ENCODE measurements at regions of chr19 and their contacts with region 1.

Region 1: DNA sequence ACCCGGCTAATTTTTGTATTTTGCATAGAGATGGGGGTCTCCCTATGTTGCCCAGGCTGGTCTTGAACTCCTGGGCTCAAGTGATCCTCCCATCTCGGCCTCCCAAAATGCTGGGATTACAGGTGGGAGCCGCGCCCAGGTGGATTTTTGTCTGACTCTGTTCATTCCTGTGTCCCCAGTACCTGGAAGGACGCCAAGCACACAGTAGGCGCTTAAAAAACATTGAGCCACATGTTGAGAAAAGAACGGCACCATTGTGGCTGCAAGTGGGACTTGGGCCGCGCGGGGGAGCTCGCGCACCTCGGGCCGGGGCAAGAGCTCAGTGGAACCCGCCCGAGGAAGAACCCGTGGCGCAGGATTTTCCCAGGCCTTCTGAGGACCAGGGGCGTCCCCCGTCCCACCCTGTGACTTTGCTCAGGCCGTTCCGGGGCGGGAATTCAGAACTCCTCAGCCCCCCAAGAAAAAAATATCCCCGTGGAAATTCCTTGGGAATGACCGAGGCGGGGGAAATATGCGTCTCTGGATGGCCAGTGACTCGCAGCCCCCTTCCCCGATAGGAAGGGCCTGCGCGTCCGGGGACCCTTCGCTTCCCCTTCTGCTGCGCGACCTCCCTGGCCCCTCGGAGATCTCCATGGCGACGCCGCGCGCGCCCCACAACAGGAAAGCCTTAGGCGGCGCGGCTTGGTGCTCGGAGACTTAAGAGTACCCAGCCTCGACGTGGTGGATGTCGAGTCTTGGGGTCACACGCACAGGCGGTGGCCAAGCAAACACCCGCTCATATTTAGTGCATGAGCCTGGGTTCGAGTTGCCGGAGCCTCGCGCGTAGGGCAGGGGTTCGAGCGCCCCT is 1.4 kb upstream of the ICAM1 start:
- DNase-seq: peak; percentile 72 to 93 (median 86)
- ATAC-seq: peak; percentile 69
- H3K4me3 ChIP-seq: peak overlapping the region; percentile 80
- H3K4me3 Mint-ChIP-seq: peak overlapping the region; percentile 86
- H3K27ac ChIP-seq: peak overlapping the region; percentile 77 to 95
- H3K27ac Mint-ChIP-seq: peak overlapping the region; percentile 80
- H3K4me1 ChIP-seq: peaks cover 36% of the 10 kb centered on the region
- H3K4me1 Mint-ChIP-seq: peaks cover 38% of the 10 kb centered on the region
- H3K27me3 ChIP-seq: no peaks in the 10 kb centered on the region
- H3K27me3 Mint-ChIP-seq: no peaks in the 10 kb centered on the region
- CTCF ChIP-seq: peak; percentile 94

Region 2: DNA sequence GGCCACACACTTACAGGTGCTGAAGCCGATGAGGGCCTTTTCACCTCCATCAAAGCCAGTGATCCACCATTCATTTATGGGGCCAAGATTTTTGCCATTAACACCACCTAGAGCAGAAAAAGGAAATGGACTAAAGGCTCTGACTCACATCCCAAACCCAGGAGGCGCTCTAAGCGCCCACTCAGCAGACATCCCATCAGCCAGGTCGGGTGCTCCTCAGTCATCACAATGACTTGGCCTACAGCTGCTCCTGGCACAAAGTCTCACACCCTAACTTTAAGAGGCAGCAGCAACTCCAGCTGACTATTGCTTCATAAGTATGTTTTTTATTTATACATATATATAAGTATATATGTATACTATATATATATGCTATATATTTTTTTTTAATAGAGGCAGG is 113.7 kb before region 1 on chr19:
- CTCF ChIA-PET with region 1: no interaction called
- POLR2A ChIA-PET with region 1: no interaction called
- intact Hi-C with region 1: no loop called
- DNase-seq: no peak
- ATAC-seq: no peak
- H3K4me3 ChIP-seq: no peak overlapping the region
- H3K4me3 Mint-ChIP-seq: no peak overlapping the region
- H3K27ac ChIP-seq: no peak overlapping the region
- H3K27ac Mint-ChIP-seq: no peak overlapping the region
- H3K4me1 ChIP-seq: no peaks in the 10 kb centered on the region
- H3K4me1 Mint-ChIP-seq: no peaks in the 10 kb centered on the region
- H3K27me3 ChIP-seq: no peaks in the 10 kb centered on the region
- H3K27me3 Mint-ChIP-seq: no peaks in the 10 kb centered on the region
- CTCF ChIP-seq: no peak

Region 3: DNA sequence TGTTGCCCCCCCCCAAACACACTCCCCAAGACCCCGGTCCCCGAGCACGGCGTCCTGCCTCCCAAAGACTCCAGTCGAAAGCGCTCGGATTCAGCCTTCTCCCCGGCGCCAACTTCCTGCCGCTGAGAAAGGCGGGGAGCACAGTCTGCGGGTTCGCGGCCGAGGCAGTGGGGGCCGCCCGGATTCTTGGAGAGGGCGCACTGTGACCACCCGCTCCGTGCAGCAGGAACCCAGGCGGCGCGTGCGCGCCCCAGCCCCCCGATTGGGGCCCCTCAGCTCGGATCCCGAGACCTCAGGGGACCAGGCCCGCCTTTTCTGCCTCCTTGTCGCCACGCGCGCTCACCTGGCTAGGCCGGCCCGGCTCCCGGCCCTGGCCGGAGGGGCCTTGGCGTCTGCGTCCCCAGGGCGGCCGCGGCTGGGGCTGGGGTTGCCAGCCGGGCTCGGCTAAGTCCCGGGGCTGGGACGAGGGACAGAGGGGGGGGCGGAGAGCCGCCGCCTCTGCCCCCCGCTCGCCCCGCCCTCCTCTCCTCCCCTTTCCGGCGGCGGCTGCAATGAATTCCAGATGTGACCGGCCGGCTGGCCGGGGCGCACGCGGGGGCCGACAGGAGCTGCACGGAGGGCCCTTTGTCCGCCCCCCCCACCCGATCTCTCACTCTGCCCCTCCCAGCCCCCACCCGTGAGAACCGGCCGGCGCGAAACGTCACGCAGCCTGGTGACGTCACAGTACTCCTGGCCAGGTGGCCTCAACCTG is 38.5 kb before region 1 on chr19 and contains the start of gene S1PR2:
- CTCF ChIA-PET with region 1: no interaction called
- POLR2A ChIA-PET with region 1: no interaction called
- intact Hi-C with region 1: no loop called
- DNase-seq: peak; percentile 37 to 91 (median 68)
- ATAC-seq: peak; percentile 59
- H3K4me3 ChIP-seq: peak within 1 kb of the TSS; percentile 96
- H3K4me3 Mint-ChIP-seq: peak within 1 kb of the TSS; percentile 92
- H3K27ac ChIP-seq: peak within 1 kb of the TSS; percentile 86 to 90
- H3K27ac Mint-ChIP-seq: peak within 1 kb of the TSS; percentile 92
- H3K4me1 ChIP-seq: peaks cover 57% of the 10 kb centered on the region
- H3K4me1 Mint-ChIP-seq: peaks cover 29% of the 10 kb centered on the region
- H3K27me3 ChIP-seq: no peaks in the 10 kb centered on the region
- H3K27me3 Mint-ChIP-seq: no peaks in the 10 kb centered on the region
- CTCF ChIP-seq: no peak
- total RNA-seq, gene S1PR2: 14.6 to 17.2 TPM

Region 4: GRCh38 chr19:10259162-10259905 is 10.2 kb before region 1 on chr19:
- CTCF ChIA-PET with region 1: interaction called, 13 read pairs
- POLR2A ChIA-PET with region 1: interaction called, 18 read pairs
- intact Hi-C with region 1: no loop called
- DNase-seq: peak; percentile 74 to 95 (median 82)
- ATAC-seq: peak; percentile 92
- H3K4me3 ChIP-seq: no peak overlapping the region
- H3K4me3 Mint-ChIP-seq: no peak overlapping the region
- H3K27ac ChIP-seq: no peak overlapping the region
- H3K27ac Mint-ChIP-seq: peak overlapping the region; percentile 47
- H3K4me1 ChIP-seq: peaks cover 20% of the 10 kb centered on the region
- H3K4me1 Mint-ChIP-seq: peaks cover 16% of the 10 kb centered on the region
- H3K27me3 ChIP-seq: no peaks in the 10 kb centered on the region
- H3K27me3 Mint-ChIP-seq: no peaks in the 10 kb centered on the region
- CTCF ChIP-seq: peak; percentile 56

Region 5: DNA sequence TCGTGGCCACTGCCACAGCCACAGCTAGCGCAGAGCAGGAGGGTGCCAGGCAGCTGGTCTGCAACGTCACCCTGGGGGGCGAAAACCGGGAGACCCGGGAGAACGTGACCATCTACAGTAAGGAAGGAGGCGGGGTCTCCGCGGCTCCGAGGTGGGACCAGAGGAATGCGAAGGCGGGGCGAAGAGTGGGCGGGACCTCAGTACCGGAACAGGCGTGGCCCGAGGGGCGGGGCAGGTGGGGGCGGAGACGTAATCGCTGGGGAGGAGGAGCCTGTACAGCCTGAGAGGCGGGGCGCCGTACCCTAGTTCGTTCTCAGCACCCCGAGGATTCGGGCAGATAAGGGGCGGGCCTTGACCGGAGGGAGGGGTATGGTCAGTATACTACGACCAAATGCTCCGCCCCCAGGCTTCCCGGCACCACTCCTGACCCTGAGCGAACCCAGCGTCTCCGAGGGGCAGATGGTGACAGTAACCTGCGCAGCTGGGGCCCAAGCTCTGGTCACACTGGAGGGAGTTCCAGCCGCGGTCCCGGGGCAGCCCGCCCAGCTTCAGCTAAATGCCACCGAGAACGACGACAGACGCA is 22.7 kb after region 1 on chr19:
- CTCF ChIA-PET with region 1: interaction called, 10 read pairs
- POLR2A ChIA-PET with region 1: interaction called, 39 read pairs
- intact Hi-C with region 1: loop called in 1 of 2 experiments (anchors 2 kb)
- DNase-seq: peak in 12 of 14 experiments; percentile 38 to 79 (median 58)
- ATAC-seq: peak; percentile 45
- H3K4me3 ChIP-seq: peak overlapping the region; percentile 48
- H3K4me3 Mint-ChIP-seq: peak overlapping the region; percentile 82
- H3K27ac ChIP-seq: no peak overlapping the region
- H3K27ac Mint-ChIP-seq: peak overlapping the region; percentile 40
- H3K4me1 ChIP-seq: peaks cover 88% of the 10 kb centered on the region
- H3K4me1 Mint-ChIP-seq: peaks cover 62% of the 10 kb centered on the region
- H3K27me3 ChIP-seq: peaks cover 82 to 85% of the 10 kb centered on the region in 2 experiments
- H3K27me3 Mint-ChIP-seq: peaks cover 88% of the 10 kb centered on the region
- CTCF ChIP-seq: no peak

Region 6: GRCh38 chr19:10332955-10333757 is 63.6 kb after region 1 on chr19 and contains the start of gene RAVER1:
- CTCF ChIA-PET with region 1: interaction called, 6 read pairs
- POLR2A ChIA-PET with region 1: interaction called, 10 read pairs
- intact Hi-C with region 1: loop called in 1 of 2 experiments (anchors 1 kb)
- DNase-seq: peak; percentile 96 to 100 (median 98)
- ATAC-seq: peak; percentile 96
- H3K4me3 ChIP-seq: peak within 1 kb of the TSS; percentile 91
- H3K4me3 Mint-ChIP-seq: peak within 1 kb of the TSS; percentile 96
- H3K27ac ChIP-seq: peak within 1 kb of the TSS; percentile 87 to 91
- H3K27ac Mint-ChIP-seq: peak within 1 kb of the TSS; percentile 92
- H3K4me1 ChIP-seq: peaks cover 54% of the 10 kb centered on the region
- H3K4me1 Mint-ChIP-seq: peaks cover 23% of the 10 kb centered on the region
- H3K27me3 ChIP-seq: no peaks in the 10 kb centered on the region
- H3K27me3 Mint-ChIP-seq: no peaks in the 10 kb centered on the region
- CTCF ChIP-seq: no peak
- total RNA-seq, gene RAVER1: 20.5 to 21.3 TPM

Region 7: DNA sequence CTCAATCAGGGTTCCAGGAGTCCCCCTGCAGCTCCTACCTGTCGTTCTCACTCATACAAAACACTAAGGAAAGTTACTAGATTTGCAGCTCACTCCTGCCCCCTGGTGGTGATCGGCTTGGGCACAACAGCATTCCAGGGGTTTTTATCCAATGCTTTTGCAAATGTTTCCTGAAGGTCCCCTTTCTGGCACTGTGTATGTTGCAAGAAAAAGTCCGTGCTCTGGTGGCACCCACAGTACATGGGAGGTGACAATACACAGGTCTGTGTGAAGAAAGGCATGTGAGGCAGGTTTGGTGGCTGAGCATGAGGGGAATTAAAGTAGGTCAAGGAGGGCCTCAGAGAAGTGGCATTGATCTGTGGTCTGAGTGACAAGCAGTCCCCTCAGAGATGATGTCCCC is 119.4 kb after region 1 on chr19:
- CTCF ChIA-PET with region 1: interaction called, 102 read pairs
- POLR2A ChIA-PET with region 1: interaction called, 69 read pairs
- intact Hi-C with region 1: loop called (anchors 1 kb)
- DNase-seq: peak; percentile 72 to 94 (median 82)
- ATAC-seq: peak; percentile 62
- H3K4me3 ChIP-seq: no peak overlapping the region
- H3K4me3 Mint-ChIP-seq: no peak overlapping the region
- H3K27ac ChIP-seq: no peak overlapping the region
- H3K27ac Mint-ChIP-seq: no peak overlapping the region
- H3K4me1 ChIP-seq: peaks cover 7% of the 10 kb centered on the region
- H3K4me1 Mint-ChIP-seq: peaks cover 4% of the 10 kb centered on the region
- H3K27me3 ChIP-seq: no peaks in the 10 kb centered on the region
- H3K27me3 Mint-ChIP-seq: no peaks in the 10 kb centered on the region
- CTCF ChIP-seq: peak; percentile 96